PC-3 (cell line): ENCODE measurements at regions of chr18 and their contacts with region 1.

Region 1: DNA sequence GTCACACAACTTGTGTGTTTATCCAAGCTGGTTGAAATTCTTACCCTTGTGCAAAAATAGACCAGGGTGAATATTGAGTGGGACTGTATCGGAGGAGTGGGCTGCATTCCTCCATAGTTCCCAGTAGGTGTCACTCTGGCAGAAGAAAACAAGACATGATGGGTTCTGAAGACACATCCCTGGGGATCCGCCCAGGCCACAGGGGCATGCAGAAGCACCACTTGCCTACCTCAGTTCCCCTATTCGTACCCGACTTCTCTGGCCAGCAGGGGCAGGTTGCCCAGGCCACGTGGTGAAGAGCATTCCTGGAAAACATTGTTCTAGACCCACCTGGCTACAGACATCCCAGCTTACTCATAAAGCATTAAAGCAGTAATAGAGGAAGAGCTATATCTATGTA is 168.2 kb downstream of the FAM210A start:
- DNase-seq: peak; percentile 59
- ATAC-seq: peak; percentile 98
- H3K4me3 ChIP-seq: no peak overlapping the region
- H3K27ac ChIP-seq: no peak overlapping the region
- H3K4me1 ChIP-seq: no peaks in the 10 kb centered on the region
- H3K27me3 ChIP-seq: peaks cover 70% of the 10 kb centered on the region
- CTCF ChIP-seq: peak; percentile 85

Region 2: DNA sequence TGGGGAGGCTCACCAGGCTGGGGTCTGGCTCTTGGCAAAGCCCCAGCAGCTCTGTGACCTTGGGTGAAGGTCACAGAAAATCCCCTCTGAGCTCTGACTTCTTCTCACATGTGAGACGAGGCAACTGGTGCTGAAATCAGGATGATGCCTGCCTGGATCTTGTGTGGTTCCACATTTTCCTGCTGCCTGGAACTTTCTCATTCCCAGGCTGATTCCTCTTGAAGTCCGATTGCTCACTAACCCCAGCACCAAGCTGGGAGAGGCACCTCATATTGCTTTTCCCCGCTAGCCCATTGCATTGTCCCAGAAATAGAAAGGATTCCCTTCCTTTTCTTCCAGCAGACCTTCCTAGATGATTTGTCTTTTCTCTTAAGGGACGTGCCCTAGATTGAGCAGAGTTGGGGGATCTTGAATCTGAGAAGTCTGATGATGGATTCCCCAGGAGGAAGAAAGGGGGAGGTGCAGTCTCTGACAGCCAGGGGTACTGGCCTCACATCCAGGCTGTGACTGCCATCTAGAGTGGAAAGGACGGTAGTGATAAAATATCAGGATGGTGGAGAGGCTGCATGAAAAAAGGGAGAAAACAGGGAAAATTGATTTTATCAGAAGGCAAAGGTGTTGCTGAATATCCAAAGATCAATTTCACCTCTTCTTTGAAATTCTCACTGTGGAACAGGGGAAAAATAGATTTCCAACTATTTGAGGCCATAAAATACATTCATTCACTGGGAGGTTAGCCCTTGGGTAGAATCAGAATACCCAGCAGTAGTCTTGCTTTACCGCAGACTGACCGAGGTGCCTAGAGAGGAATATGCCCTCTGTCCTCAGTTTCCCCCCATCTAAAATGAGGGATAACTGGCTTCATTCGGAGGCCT is 72.0 kb after region 1 on chr18:
- CTCF ChIA-PET with region 1: no interaction called
- POLR2A ChIA-PET with region 1: no interaction called
- intact Hi-C with region 1: loop called (anchors 1 kb)
- DNase-seq: peak; percentile 74
- ATAC-seq: peak; percentile 98
- H3K4me3 ChIP-seq: no peak overlapping the region
- H3K27ac ChIP-seq: no peak overlapping the region
- H3K4me1 ChIP-seq: no peaks in the 10 kb centered on the region
- H3K27me3 ChIP-seq: peaks cover 48% of the 10 kb centered on the region
- CTCF ChIP-seq: peak; percentile 88

Region 3: GRCh38 chr18:13653746-13654433 is 95.8 kb after region 1 on chr18:
- CTCF ChIA-PET with region 1: no interaction called
- POLR2A ChIA-PET with region 1: no interaction called
- intact Hi-C with region 1: no loop called
- DNase-seq: no peak
- ATAC-seq: no peak
- H3K4me3 ChIP-seq: no peak overlapping the region
- H3K27ac ChIP-seq: no peak overlapping the region
- H3K4me1 ChIP-seq: no peaks in the 10 kb centered on the region
- H3K27me3 ChIP-seq: no peaks in the 10 kb centered on the region
- CTCF ChIP-seq: no peak

Region 4: DNA sequence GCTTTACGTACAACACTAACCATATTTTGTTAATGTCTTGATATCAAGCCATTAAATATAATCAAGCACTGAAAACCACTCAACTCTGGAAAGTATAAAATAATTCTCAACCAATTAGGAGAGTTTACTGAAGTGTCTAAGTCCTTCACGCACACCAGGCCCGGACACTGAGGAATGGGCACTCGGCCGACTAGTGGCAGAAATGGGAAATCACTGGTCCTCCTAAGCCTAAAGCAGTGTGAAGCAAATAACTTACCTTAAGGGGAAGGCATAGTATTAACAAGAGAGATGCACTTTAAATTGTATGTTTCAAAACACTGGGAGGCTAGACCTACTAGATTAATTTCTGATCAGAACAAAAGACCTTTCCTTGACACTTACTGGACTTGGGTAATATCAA is 122.5 kb after region 1 on chr18:
- CTCF ChIA-PET with region 1: no interaction called
- POLR2A ChIA-PET with region 1: no interaction called
- intact Hi-C with region 1: no loop called
- DNase-seq: no peak
- ATAC-seq: no peak
- H3K4me3 ChIP-seq: no peak overlapping the region
- H3K27ac ChIP-seq: no peak overlapping the region
- H3K4me1 ChIP-seq: no peaks in the 10 kb centered on the region
- H3K27me3 ChIP-seq: no peaks in the 10 kb centered on the region
- CTCF ChIP-seq: peak; percentile 41; the same call in 1 of the 2 replicates

Region 5: DNA sequence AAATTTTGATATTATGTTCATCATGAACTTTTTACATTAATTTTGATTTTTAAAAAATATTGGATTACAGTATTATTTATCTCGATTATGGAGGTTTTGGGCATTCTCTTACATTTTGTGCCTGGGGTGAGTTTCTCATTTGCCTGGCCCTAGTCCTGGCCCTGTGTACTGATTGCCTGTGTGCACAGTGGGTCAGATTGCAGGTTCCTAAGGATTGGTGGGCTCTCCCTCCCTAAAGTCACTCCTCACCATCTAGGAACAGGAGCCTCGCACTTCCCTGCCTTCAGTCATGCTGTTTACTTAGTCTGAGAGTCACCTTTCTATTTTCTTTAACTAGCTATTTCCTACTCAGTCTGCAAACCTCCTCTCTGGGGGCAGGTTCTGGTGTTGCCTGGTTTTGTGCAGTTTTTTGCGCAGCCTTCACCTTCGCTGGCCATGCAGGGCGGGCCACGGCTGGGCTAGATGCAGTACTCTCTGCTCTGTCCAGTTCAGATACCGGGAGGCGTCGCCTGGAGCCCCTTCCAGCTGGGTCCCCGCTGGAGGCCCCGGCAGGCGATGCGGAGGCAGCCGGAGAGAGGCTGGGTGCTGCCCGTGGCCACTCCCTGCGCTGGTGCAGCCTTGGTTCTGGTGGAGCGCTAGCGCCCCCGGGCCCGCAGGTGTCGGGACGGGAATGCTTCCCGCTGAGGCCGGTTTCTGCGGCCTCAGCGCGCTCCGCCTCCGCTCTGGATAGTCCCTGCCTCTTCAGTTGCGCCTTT is 242.6 kb after region 1 on chr18:
- CTCF ChIA-PET with region 1: interaction called, 3 read pairs
- POLR2A ChIA-PET with region 1: no interaction called
- intact Hi-C with region 1: loop called (anchors 1 kb)
- DNase-seq: peak; percentile 85
- ATAC-seq: peak; percentile 99
- H3K4me3 ChIP-seq: peak overlapping the region; percentile 65
- H3K27ac ChIP-seq: no peak overlapping the region
- H3K4me1 ChIP-seq: peaks cover 26% of the 10 kb centered on the region
- H3K27me3 ChIP-seq: peaks cover 4% of the 10 kb centered on the region
- CTCF ChIP-seq: peak; percentile 74